ENCODE measurements at regions of chr7 and their contacts with region 1.

Region 1: GRCh38 chr7:135274495-135275268 is 41.0 kb downstream of the STRA8 start:
- DNase-seq: peak; percentile 58 to 90
- H3K4me3 ChIP-seq: no peak overlapping the region
- CTCF ChIP-seq: peak in 1 of 3 donors; percentile 18
- POLR2A ChIP-seq: no peak

Region 2: DNA sequence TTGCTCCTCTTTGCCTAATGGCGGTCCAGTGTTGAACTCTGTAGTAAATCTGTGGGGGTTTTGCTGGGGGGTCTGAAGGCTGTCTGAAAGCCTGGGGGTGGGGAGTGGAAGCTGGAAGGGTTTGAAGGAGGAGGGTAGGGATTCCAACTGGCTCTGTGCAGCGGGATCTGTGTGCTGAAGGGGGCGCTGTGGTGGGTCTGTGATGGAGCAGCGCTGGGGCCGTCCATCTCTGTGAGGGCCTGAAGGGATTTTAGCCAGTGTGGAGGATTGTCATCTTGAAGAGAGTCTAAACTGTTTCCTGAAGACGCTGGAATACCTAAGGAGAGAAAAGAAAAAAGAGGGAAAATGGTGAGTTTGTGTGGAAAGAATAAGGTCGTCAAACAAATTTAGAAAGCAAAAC is 88.2 kb after region 1 on chr7:
- intact Hi-C with region 1: no loop called
- DNase-seq: no peak
- H3K4me3 ChIP-seq: no peak overlapping the region
- CTCF ChIP-seq: no peak
- POLR2A ChIP-seq: no peak

Region 3: DNA sequence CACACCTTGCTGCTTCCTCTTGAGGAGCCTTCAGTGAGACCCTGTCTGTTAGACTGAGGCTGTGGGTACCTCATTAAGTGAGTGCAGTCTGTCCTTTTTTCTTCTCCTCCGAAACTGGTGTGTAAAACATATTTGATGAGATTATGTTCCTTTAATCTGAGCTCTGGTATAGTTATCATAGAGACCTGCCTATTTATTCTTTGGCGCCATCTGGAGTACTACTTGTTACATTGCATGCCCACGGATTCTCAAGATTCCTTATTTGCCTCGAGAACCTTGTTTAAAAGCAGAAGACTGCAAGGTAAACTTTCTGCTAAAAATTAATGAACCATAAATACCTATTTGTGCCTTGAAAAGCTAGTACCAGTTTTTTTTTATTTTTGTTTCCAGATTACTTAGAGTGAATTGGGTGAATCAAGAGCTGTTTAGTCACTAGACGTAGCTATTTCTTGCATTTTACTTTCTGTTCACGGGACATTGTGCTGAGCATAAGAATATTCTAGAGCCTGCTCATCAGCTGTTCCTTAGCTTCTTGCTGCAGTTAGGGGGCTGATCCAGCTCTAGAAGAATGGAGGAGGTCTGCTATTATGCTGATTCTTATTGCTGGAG is 370.7 kb after region 1 on chr7:
- intact Hi-C with region 1: loop called (anchors 10 kb)
- DNase-seq: no peak
- H3K4me3 ChIP-seq: no peak overlapping the region
- CTCF ChIP-seq: no peak
- POLR2A ChIP-seq: no peak

Measured in lower leg skin (tissue), 4 donors.